Left lung (tissue), 14 donors: ENCODE measurements at regions of chr9 and their contacts with region 1.

Region 1: GRCh38 chr9:1009101-1009707 is 32.7 kb downstream of the DMRT3 start:
- DNase-seq: peak; percentile 72 to 91 (median 81)
- ATAC-seq: peak; percentile 96
- H3K4me3 ChIP-seq: no peak overlapping the region
- H3K27ac ChIP-seq: no peak overlapping the region
- H3K4me1 ChIP-seq: no peaks in the 10 kb centered on the region
- H3K27me3 ChIP-seq: peaks cover 0 to 28% of the 10 kb centered on the region in 2 donors
- CTCF ChIP-seq: peak; percentile 96 to 97

Region 2: GRCh38 chr9:893843-894420 is 115.3 kb before region 1 on chr9:
- intact Hi-C with region 1: loop called in 1 of 2 experiments (anchors 5 kb)
- DNase-seq: peak in 3 of 4 donors; percentile 34 to 68 (median 40)
- ATAC-seq: peak; percentile 99
- H3K4me3 ChIP-seq: no peak overlapping the region
- H3K27ac ChIP-seq: no peak overlapping the region
- H3K4me1 ChIP-seq: peaks cover 0 to 8% of the 10 kb centered on the region in 2 donors
- H3K27me3 ChIP-seq: no peaks in the 10 kb centered on the region
- CTCF ChIP-seq: peak; percentile 66 to 72

Region 3: GRCh38 chr9:967903-968641 is 41.1 kb before region 1 on chr9:
- intact Hi-C with region 1: no loop called
- DNase-seq: no peak
- ATAC-seq: no peak
- H3K4me3 ChIP-seq: no peak overlapping the region
- H3K27ac ChIP-seq: no peak overlapping the region
- H3K4me1 ChIP-seq: peaks cover 0 to 16% of the 10 kb centered on the region in 2 donors
- H3K27me3 ChIP-seq: peaks cover 98 to 100% of the 10 kb centered on the region in 2 donors
- CTCF ChIP-seq: no peak